Activated naive CD4-positive, alpha-beta T cell treated with anti-CD3 and anti-CD28 coated beads for 36 hours (primary cell): ENCODE measurements at regions of chr4 and their contacts with region 1.

Region 1: DNA sequence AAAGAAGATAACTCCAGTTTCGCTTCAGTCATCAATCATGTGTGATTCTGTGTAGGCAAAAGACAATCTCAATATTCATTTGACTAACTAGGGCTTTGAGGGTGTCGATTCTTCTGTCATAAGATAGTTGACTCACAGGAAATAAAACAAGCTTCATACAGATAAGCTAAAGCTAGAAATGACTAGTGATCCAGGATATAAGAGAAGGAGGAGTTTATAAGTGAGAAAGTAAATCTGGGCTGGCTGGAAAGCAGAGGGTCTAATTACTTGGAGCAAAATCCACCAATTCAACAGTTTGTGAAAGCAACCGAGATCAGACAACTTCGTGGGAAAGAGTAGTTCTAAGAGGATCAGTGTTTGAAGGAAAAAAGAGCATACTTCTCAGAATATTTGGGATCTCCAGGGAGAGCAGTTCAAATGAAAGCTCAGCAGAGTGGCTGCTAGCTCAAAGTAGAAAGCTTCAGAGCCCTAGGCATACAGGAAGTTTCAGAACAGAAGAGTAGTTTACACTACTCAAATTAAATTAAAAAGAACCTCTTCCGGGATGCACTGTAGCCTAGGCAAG is 429.3 kb downstream of the INPP4B start:
- DNase-seq: peak; percentile 36
- H3K4me3 Mint-ChIP-seq: peak overlapping the region; percentile 62
- H3K27ac Mint-ChIP-seq: peak overlapping the region; percentile 95
- H3K4me1 Mint-ChIP-seq: peaks cover 66% of the 10 kb centered on the region
- H3K27me3 Mint-ChIP-seq: no peaks in the 10 kb centered on the region

Region 2: DNA sequence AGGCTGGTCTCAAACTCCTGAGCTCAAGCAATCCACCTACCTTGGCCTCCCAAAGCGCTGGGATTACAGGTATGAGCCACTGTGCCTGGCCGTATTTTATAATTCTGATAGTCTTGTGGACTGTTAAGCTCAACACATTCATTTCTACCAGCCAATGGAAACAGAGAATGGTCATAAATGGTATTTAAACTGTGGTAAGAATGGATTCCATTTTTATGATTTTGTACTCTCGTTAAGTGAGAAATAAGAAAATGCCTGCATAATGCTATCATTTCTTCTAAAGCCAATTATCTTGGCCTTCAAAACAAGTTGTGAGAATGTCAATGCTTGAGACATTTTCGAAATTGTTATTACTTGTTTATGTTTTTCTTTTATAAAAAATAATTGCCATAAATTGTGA is 459.4 kb before region 1 on chr4:
- CTCF ChIA-PET with region 1: no interaction called
- intact Hi-C with region 1: no loop called
- DNase-seq: no peak
- H3K4me3 Mint-ChIP-seq: no peak overlapping the region
- H3K27ac Mint-ChIP-seq: no peak overlapping the region
- H3K4me1 Mint-ChIP-seq: no peaks in the 10 kb centered on the region
- H3K27me3 Mint-ChIP-seq: peaks cover 5% of the 10 kb centered on the region

Region 3: GRCh38 chr4:142353149-142353738 is 63.5 kb before region 1 on chr4:
- CTCF ChIA-PET with region 1: interaction called, 11 read pairs
- intact Hi-C with region 1: loop called (anchors 1 kb)
- DNase-seq: no peak
- H3K4me3 Mint-ChIP-seq: peak overlapping the region; percentile 48
- H3K27ac Mint-ChIP-seq: peak overlapping the region; percentile 90
- H3K4me1 Mint-ChIP-seq: peaks cover 94% of the 10 kb centered on the region
- H3K27me3 Mint-ChIP-seq: no peaks in the 10 kb centered on the region

Region 4: GRCh38 chr4:142379277-142380057 is 37.3 kb before region 1 on chr4:
- CTCF ChIA-PET with region 1: interaction called, 5 read pairs
- intact Hi-C with region 1: loop called (anchors 1 kb)
- DNase-seq: no peak
- H3K4me3 Mint-ChIP-seq: no peak overlapping the region
- H3K27ac Mint-ChIP-seq: peak overlapping the region; percentile 75
- H3K4me1 Mint-ChIP-seq: peaks cover 72% of the 10 kb centered on the region
- H3K27me3 Mint-ChIP-seq: no peaks in the 10 kb centered on the region

Region 5: GRCh38 chr4:142535009-142535408 is 118.2 kb after region 1 on chr4:
- CTCF ChIA-PET with region 1: no interaction called
- intact Hi-C with region 1: loop called (anchors 1 kb)
- DNase-seq: no peak
- H3K4me3 Mint-ChIP-seq: no peak overlapping the region
- H3K27ac Mint-ChIP-seq: no peak overlapping the region
- H3K4me1 Mint-ChIP-seq: peaks cover 48% of the 10 kb centered on the region
- H3K27me3 Mint-ChIP-seq: no peaks in the 10 kb centered on the region

Region 6: DNA sequence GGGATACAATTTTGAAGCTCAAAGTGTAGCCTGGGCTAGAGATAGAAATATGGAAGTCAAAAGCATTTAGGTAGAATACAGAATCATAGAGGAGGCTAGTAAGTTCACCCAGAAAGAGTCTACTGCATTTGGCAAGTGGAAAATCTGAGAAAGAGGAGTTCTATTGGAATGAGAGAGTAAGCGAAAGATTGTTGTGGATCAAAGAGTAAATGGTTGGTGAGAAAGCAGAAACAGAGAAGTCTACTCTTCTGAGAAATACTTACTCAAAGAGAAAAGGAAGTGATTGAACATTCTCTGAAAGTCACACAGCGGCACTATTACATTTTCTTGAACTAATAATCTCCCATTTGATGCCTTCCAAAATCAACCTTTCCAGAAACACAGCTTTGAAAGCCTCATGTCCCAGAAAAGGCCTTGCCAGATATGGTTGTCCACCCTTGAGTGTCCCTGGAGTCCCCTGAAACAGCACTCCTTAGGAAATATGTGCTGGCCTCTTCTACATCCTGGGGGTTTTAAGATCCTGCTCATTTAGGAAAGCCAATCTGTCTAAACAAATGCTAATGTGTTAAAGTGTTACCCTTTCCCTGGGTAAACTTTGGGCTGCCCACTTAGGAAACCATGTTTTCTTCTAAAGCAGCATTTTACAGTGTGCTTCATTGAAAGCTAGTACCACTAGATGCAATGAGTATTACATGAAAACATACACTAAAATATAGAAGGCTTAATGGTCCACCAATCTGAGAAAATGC is 296.7 kb after region 1 on chr4:
- CTCF ChIA-PET with region 1: no interaction called
- intact Hi-C with region 1: loop called (anchors 1 kb)
- DNase-seq: no peak
- H3K4me3 Mint-ChIP-seq: peak overlapping the region; percentile 9
- H3K27ac Mint-ChIP-seq: peak overlapping the region; percentile 92
- H3K4me1 Mint-ChIP-seq: peaks cover 76% of the 10 kb centered on the region
- H3K27me3 Mint-ChIP-seq: no peaks in the 10 kb centered on the region

Region 7: DNA sequence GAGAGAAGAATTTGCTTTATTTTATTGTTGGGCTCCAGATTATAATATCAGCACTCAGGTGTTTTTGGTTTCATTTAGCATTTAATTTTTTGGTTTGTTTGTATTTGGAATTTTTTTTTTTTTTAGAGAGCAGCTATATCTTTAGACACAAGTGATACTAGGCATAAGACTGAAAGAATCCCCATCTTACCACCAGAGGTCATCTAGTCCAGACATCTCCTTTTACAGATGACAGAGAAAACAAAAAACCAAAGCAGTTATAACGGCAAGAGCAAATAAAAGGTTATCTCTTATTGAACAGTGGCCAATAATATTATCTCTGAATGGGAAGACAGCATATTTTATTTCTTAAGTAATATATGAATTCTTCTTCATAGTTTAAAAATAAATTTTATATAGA is 790.8 kb after region 1 on chr4:
- CTCF ChIA-PET with region 1: no interaction called
- intact Hi-C with region 1: no loop called
- DNase-seq: no peak
- H3K4me3 Mint-ChIP-seq: no peak overlapping the region
- H3K27ac Mint-ChIP-seq: no peak overlapping the region
- H3K4me1 Mint-ChIP-seq: peaks cover 3% of the 10 kb centered on the region
- H3K27me3 Mint-ChIP-seq: no peaks in the 10 kb centered on the region